ENCODE measurements at regions of chr1 and their contacts with region 1.

Region 1: DNA sequence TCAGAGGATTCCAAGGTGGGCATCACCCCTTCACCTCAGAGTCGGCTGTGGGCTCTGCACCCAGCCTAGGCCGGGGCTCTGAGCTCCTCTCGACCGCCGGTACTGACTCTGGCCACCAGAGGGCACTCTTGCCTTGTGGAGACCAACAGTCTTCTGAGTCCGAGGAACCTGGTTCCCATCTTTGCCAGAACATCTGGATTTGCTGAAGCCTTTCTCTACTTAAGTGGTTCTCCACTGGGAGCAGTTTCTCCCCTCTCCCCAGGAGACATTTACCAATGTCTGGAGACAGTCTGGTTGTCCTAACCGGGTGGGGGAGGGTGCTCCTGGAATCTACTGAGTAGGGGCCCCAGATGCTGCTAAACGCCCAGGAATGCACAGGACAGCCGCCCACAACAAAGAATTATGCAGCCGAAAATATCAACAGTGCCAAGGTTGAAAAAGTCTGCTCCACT is 9.4 kb downstream of the ETV3L start:
- DNase-seq: peak; percentile 60
- H3K4me3 ChIP-seq: no peak overlapping the region
- H3K27ac ChIP-seq: no peak overlapping the region
- H3K4me1 ChIP-seq: peaks cover 10% of the 10 kb centered on the region
- H3K27me3 ChIP-seq: no peaks in the 10 kb centered on the region
- CTCF ChIP-seq: peak; percentile 88 to 94

Region 2: GRCh38 chr1:157132641-157133053 is 42.4 kb after region 1 on chr1:
- CTCF ChIA-PET with region 1: interaction called, 11 read pairs
- dilution Hi-C with region 1: no loop called
- in situ Hi-C with region 1: no loop called
- intact Hi-C with region 1: loop called (anchors 1 kb)
- DNase-seq: peak; percentile 84
- H3K4me3 ChIP-seq: no peak overlapping the region
- H3K27ac ChIP-seq: peak overlapping the region; percentile 55
- H3K4me1 ChIP-seq: peaks cover 49% of the 10 kb centered on the region
- H3K27me3 ChIP-seq: no peaks in the 10 kb centered on the region
- CTCF ChIP-seq: no peak

Region 3: GRCh38 chr1:157156058-157156541 is 65.9 kb after region 1 on chr1:
- CTCF ChIA-PET with region 1: interaction called, 45 read pairs
- dilution Hi-C with region 1: no loop called
- in situ Hi-C with region 1: loop called in 1 of 2 experiments (anchors 5 kb)
- intact Hi-C with region 1: loop called (anchors 1 kb)
- DNase-seq: peak; percentile 27
- H3K4me3 ChIP-seq: no peak overlapping the region
- H3K27ac ChIP-seq: no peak overlapping the region
- H3K4me1 ChIP-seq: peaks cover 39% of the 10 kb centered on the region
- H3K27me3 ChIP-seq: no peaks in the 10 kb centered on the region
- CTCF ChIP-seq: peak; percentile 71 to 94

Region 4: DNA sequence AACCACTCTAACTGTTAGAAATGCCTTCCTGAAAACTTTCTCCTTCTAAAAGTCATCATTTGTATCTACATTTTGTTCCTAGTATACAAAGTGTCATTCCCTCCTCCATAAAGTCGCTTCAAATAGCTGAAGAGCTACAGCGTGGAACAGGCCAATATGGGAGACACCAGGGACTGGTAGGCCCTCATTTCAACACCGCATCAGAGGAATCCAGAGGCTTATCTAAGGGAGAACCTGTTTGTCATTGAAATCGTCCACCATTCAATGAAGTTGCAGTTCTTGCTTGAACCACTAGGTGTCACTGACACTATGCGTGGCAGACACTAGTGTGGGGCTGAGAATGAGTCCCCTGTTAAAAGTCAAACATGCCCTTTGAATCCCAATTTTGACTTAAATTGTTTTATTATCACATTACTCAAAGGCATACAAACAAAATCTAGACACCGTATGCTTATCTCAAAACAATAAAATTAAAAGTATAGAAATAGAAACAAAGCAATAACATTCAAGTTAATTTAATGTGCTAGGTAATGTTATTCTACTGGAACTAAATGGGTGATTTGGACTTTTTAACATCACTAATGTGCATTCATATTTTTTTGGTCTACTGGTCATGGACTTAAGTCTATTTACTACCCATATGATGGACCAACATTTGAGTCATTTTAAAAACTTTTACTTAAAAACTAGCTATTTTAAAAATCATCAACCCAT is 279.7 kb after region 1 on chr1:
- CTCF ChIA-PET with region 1: no interaction called
- dilution Hi-C with region 1: no loop called
- in situ Hi-C with region 1: no loop called
- intact Hi-C with region 1: loop called (anchors 10 kb)
- DNase-seq: peak; percentile 50
- H3K4me3 ChIP-seq: no peak overlapping the region
- H3K27ac ChIP-seq: no peak overlapping the region
- H3K4me1 ChIP-seq: no peaks in the 10 kb centered on the region
- H3K27me3 ChIP-seq: no peaks in the 10 kb centered on the region
- CTCF ChIP-seq: peak; percentile 83 to 91

Measured in mammary epithelial cell (primary cell).